CD4-positive, alpha-beta memory T cell (primary cell): ENCODE measurements at regions of chr11 and their contacts with region 1.

Region 1: GRCh38 chr11:65888163-65888814 is at the start of gene FIBP:
- DNase-seq: peak; percentile 90 to 97 (median 91)
- H3K4me3 ChIP-seq: peak within 1 kb of the TSS; percentile 79 to 83
- H3K4me3 Mint-ChIP-seq: peak within 1 kb of the TSS; percentile 86 to 97 (median 91)
- H3K27ac ChIP-seq: peak within 1 kb of the TSS; percentile 86
- H3K27ac Mint-ChIP-seq: peak within 1 kb of the TSS; percentile 95 to 100 (median 99)
- H3K4me1 ChIP-seq: peaks cover 63% of the 10 kb centered on the region
- H3K4me1 Mint-ChIP-seq: peaks cover 34 to 73% (median 56%) of the 10 kb centered on the region in 4 donors
- H3K27me3 ChIP-seq: no peaks in the 10 kb centered on the region
- H3K27me3 Mint-ChIP-seq: no peaks in the 10 kb centered on the region
- total RNA-seq, gene FIBP: 39.9 to 42.1 TPM

Region 2: GRCh38 chr11:65833297-65834030 is 54.8 kb before region 1 on chr11 and contains the start of gene SNX32:
- CTCF ChIA-PET with region 1: interaction called, 15 read pairs
- POLR2A ChIA-PET with region 1: interaction called, 9 read pairs
- intact Hi-C with region 1: no loop called
- DNase-seq: peak; percentile 91 to 94 (median 93)
- H3K4me3 ChIP-seq: peak within 1 kb of the TSS; percentile 31 to 67
- H3K4me3 Mint-ChIP-seq: no peak within 1 kb of the TSS
- H3K27ac ChIP-seq: peak within 1 kb of the TSS; percentile 17
- H3K27ac Mint-ChIP-seq: peak within 1 kb of the TSS in 5 of 7 donors; percentile 29 to 82 (median 70)
- H3K4me1 ChIP-seq: peaks cover 20% of the 10 kb centered on the region
- H3K4me1 Mint-ChIP-seq: peaks cover 8% of the 10 kb centered on the region in 4 donors
- H3K27me3 ChIP-seq: no peaks in the 10 kb centered on the region
- H3K27me3 Mint-ChIP-seq: no peaks in the 10 kb centered on the region
- total RNA-seq, gene SNX32: 0.42 to 0.64 TPM

Region 3: GRCh38 chr11:65868076-65868667 is 20.1 kb before region 1 on chr11:
- CTCF ChIA-PET with region 1: interaction called, 281 read pairs
- POLR2A ChIA-PET with region 1: interaction called, 435 read pairs
- intact Hi-C with region 1: loop called (anchors 2 kb)
- DNase-seq: peak in 2 of 5 donors; percentile 30 to 56
- H3K4me3 ChIP-seq: no peak overlapping the region
- H3K4me3 Mint-ChIP-seq: no peak overlapping the region
- H3K27ac ChIP-seq: no peak overlapping the region
- H3K27ac Mint-ChIP-seq: peak overlapping the region in 3 of 7 donors; percentile 31 to 55 (median 52)
- H3K4me1 ChIP-seq: peaks cover 11% of the 10 kb centered on the region
- H3K4me1 Mint-ChIP-seq: peaks cover 7 to 32% (median 20%) of the 10 kb centered on the region in 4 donors
- H3K27me3 ChIP-seq: no peaks in the 10 kb centered on the region
- H3K27me3 Mint-ChIP-seq: no peaks in the 10 kb centered on the region

Region 4: DNA sequence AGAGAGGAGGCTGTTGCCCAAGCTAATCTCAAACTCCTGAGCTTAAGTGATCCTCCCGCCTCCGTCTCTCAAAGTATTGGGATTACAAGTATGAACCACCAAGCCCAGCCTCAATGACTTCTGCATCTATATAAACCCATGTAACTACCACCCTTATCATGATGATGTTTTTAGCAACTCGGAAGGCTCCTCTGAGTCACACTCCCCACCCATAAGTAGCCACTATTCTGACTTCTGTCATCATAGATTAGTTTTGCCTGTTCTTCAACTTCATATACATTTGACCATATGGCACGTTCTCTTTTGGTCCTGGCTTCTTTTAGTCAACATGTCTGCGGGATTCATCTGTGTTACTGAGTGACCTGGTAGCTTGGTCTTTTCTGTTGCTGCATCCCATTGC is 18.3 kb after region 1 on chr11:
- CTCF ChIA-PET with region 1: interaction called, 162 read pairs
- POLR2A ChIA-PET with region 1: interaction called, 97 read pairs
- intact Hi-C with region 1: no loop called
- DNase-seq: no peak
- H3K4me3 ChIP-seq: no peak overlapping the region
- H3K4me3 Mint-ChIP-seq: no peak overlapping the region
- H3K27ac ChIP-seq: no peak overlapping the region
- H3K27ac Mint-ChIP-seq: no peak overlapping the region
- H3K4me1 ChIP-seq: no peaks in the 10 kb centered on the region
- H3K4me1 Mint-ChIP-seq: peaks cover 2 to 13% (median 5%) of the 10 kb centered on the region in 4 donors
- H3K27me3 ChIP-seq: no peaks in the 10 kb centered on the region
- H3K27me3 Mint-ChIP-seq: peaks cover 3 to 8% of the 10 kb centered on the region in 2 donors

Region 5: GRCh38 chr11:65927904-65928397 is 39.7 kb after region 1 on chr11:
- CTCF ChIA-PET with region 1: interaction called, 21 read pairs
- POLR2A ChIA-PET with region 1: interaction called, 320 read pairs
- intact Hi-C with region 1: loop called (anchors 1 kb)
- DNase-seq: peak; percentile 77 to 91 (median 79)
- H3K4me3 ChIP-seq: peak overlapping the region; percentile 30 to 66
- H3K4me3 Mint-ChIP-seq: peak overlapping the region; percentile 73 to 90 (median 82)
- H3K27ac ChIP-seq: peak overlapping the region; percentile 72
- H3K27ac Mint-ChIP-seq: peak overlapping the region; percentile 84 to 98 (median 95)
- H3K4me1 ChIP-seq: peaks cover 24% of the 10 kb centered on the region
- H3K4me1 Mint-ChIP-seq: peaks cover 18 to 34% (median 25%) of the 10 kb centered on the region in 4 donors
- H3K27me3 ChIP-seq: no peaks in the 10 kb centered on the region
- H3K27me3 Mint-ChIP-seq: no peaks in the 10 kb centered on the region

Region 6: DNA sequence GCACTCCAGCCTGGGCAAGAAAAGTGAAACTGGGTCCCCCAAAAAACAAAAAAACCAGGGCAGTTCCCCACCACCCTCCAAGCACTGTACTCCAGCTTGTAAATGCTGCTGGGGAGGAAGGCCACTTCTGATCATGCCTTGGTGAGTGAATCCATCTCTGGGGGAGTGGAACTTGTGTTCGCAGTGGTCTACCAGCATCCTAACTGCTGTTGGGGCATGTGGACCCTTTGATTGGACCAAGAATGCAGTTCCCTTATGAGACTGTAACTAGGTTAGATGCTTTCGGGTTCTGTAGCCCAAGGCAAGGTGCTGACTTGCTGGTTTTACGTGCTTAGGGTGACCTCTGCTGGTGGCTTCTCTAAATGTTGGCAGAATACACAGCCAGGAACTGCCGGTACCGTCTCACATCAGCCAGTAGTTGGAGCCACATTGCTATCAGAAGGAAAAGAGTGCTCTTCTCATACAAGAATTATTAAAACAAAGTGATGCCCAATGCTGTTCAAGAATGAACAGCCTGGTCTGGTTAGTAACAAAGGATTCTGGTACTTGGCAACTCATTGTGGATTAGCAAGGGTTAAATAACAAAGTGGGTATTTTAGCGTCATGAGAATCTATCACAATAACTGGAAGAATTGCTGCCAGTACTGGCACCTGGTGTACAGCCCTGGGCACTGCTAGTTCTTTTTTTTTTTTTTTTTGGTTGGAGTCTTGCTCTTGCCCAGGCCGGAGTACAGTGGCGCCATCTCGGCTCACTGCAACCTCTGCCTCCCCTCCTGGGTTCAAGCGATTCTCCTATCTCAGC is 100.7 kb after region 1 on chr11:
- CTCF ChIA-PET with region 1: interaction called, 255 read pairs
- POLR2A ChIA-PET with region 1: interaction called, 18 read pairs
- intact Hi-C with region 1: loop called (anchors 1 kb)
- DNase-seq: peak; percentile 92 to 94 (median 93)
- H3K4me3 ChIP-seq: no peak overlapping the region
- H3K4me3 Mint-ChIP-seq: peak overlapping the region in 1 of 8 donors; percentile 3
- H3K27ac ChIP-seq: no peak overlapping the region
- H3K27ac Mint-ChIP-seq: peak overlapping the region; percentile 68 to 95 (median 86)
- H3K4me1 ChIP-seq: peaks cover 6% of the 10 kb centered on the region
- H3K4me1 Mint-ChIP-seq: peaks cover 5 to 7% (median 6%) of the 10 kb centered on the region in 4 donors
- H3K27me3 ChIP-seq: no peaks in the 10 kb centered on the region
- H3K27me3 Mint-ChIP-seq: no peaks in the 10 kb centered on the region

Region 7: DNA sequence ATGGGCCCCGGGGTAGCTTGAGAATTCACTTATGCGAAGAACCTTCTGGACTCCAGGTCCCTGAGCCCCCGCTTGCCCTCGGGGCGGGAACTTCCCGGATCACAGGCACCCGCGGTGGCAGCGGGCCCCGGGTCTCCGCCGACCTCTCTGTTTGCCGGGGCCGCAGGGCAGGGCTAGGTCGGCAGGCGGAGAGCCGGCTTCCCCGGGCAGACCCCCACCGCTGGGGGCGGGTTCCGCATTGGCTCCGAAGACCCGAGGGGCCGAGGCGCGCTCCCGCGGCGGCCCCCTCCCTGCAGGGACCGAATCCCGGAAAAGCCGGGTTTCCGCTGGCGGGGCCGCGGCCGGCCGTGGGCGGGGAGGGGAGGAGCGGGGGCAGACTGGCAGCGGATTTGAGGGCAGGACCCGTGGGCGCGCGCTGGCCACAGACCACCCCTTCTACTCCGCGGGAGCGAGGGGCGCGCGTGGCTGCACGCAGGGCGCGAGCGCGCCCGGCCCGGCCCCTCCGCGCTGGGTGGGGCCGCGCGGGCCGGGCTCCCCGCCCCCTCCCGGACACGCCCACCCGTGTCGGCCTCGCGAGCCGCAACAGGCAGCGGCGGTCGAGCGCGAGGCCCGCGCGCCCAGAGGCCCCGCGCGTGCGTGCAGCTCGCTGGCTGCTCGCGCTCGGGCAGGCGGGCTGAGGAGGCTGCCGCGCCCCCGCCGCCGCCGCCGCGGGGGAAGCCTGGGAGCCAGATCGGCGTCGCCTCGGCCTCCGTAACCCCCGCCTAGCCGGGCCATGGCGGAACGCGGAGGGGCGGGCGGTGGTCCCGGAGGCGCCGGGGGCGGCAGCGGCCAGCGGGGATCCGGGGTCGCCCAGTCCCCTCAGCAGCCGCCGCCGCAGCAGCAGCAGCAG is 181.7 kb after region 1 on chr11 and contains the start of gene PACS1:
- CTCF ChIA-PET with region 1: interaction called, 13 read pairs
- POLR2A ChIA-PET with region 1: interaction called, 5 read pairs
- intact Hi-C with region 1: no loop called
- DNase-seq: peak; percentile 71 to 81 (median 78)
- H3K4me3 ChIP-seq: peak within 1 kb of the TSS; percentile 59 to 98
- H3K4me3 Mint-ChIP-seq: peak within 1 kb of the TSS; percentile 91 to 98 (median 96)
- H3K27ac ChIP-seq: peak within 1 kb of the TSS; percentile 77
- H3K27ac Mint-ChIP-seq: peak within 1 kb of the TSS; percentile 93 to 99 (median 95)
- H3K4me1 ChIP-seq: peaks cover 59% of the 10 kb centered on the region
- H3K4me1 Mint-ChIP-seq: peaks cover 44 to 69% (median 54%) of the 10 kb centered on the region in 4 donors
- H3K27me3 ChIP-seq: no peaks in the 10 kb centered on the region
- H3K27me3 Mint-ChIP-seq: no peaks in the 10 kb centered on the region
- total RNA-seq, gene PACS1: 251 to 262 TPM